Vagina (tissue), 2 donors: ENCODE measurements at regions of chr11 and their contacts with region 1.

Region 1: DNA sequence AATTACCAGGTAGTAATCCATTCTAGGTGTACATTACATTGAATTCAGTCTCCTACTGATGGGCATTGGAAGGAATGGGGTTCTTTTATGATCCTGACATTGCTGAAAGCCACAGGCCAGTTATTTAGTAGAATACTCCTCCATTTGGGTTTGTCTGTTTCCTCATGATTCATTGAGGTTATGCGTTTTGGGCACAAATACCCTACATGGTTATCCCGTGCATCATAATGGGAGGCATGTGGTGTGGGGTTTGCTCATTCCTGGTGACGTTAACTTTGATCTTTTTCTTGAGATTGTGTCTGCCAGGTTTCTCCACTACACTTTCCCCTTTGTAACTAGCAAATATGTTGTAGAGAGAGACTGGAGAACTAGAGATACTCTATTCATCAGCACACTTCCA is 5.5 kb downstream of the FOLR3 start:
- DNase-seq: no peak
- H3K4me3 ChIP-seq: no peak overlapping the region
- H3K27ac ChIP-seq: no peak overlapping the region
- H3K4me1 ChIP-seq: no peaks in the 10 kb centered on the region
- H3K27me3 ChIP-seq: no peaks in the 10 kb centered on the region
- CTCF ChIP-seq: no peak
- POLR2A ChIP-seq: no peak

Region 2: DNA sequence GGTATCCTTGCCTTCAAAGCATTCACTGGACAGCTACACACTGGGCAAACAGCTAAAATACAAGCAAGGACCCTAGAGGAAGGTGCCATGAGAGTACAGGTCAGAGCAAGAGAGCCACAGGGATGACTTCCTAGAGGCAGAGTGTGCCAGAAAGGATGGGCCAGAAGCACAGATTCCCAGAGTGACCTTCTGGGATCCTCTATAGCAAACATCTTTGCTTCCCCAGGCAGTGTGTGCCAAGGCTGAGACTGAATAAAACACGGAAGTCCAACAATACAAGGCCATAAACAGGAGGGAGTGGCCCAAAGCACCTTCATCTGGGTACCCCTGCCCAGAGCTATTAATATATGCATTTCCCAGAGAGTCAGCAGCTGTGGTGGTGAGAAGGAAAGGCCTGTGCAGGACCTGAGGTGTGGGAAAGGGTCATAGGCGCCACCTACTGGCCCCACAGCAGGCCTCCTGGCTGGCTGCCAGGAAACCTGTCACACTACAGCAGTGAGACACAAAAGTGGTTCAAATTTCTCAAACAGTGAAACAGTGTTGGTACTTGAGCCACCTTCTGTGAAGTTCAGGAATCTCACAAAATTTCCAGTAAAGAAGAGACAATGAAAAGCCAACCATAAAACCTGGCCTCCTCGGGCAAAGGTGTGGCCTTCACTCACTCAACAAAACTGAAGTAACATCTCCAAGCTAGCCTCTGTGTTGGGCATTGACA is 273.0 kb after region 1 on chr11:
- intact Hi-C with region 1: loop called (anchors 10 kb)
- DNase-seq: no peak
- H3K4me3 ChIP-seq: no peak overlapping the region
- H3K27ac ChIP-seq: no peak overlapping the region
- H3K4me1 ChIP-seq: peaks cover 11% of the 10 kb centered on the region
- H3K27me3 ChIP-seq: no peaks in the 10 kb centered on the region
- CTCF ChIP-seq: peak; percentile 43 to 64 (median 61)
- POLR2A ChIP-seq: no peak